HEK293T (cell line): ENCODE measurements at regions of chr5 and their contacts with region 1.

Region 1: GRCh38 chr5:132777209-132778069 is at the start of gene SEPTIN8:
- DNase-seq: peak; percentile 75

Region 2: DNA sequence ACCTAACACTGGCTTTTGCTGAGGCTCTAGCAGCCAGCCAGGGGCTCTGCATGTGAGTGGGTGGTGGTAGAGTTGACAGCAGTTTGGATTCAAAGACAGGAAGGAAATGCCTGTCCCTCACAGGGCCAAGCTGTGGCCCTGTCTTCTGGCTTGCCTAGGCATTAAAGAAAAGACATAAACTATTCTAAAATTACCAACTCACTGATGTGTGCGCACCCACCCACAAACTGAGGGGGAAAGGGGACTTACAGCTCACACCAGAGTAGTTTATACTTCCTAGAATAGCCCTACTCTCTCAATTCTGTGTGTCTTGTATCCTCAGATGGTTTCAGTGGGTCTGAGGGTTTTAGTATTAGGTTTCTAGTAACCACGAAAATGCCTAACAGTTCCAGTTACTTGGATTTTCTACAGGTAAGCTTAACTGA is 137.7 kb before region 1 on chr5:
- CTCF ChIA-PET with region 1: no interaction called
- POLR2A ChIA-PET with region 1: no interaction called
- DNase-seq: no peak

Region 3: GRCh38 chr5:132736853-132737833 is 40.3 kb before region 1 on chr5 and contains the start of gene KIF3A:
- CTCF ChIA-PET with region 1: no interaction called
- POLR2A ChIA-PET with region 1: interaction called, 16 read pairs
- DNase-seq: peak; percentile 100

Region 4: DNA sequence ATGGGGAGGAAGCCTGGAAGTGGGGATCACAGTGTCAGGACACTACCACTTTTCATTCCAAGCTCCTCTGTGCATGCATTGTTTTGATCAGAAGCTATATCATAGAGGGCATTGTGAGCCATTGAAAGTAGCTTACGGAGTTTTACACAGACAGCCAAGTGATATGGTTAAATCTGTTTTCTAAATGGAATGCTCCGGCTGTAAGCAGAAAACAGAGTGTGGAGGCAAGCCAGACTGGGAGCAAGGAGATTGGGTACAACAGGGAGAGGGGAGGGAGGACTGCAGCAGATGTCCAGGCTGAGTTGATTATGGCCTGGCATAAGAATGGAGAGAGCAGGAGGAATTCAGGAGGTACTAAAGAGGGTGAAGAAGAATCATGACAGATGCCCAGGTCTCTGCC is 20.2 kb after region 1 on chr5:
- CTCF ChIA-PET with region 1: interaction called, 3 read pairs
- POLR2A ChIA-PET with region 1: interaction called, 10 read pairs
- DNase-seq: no peak

Region 5: GRCh38 chr5:132854301-132854700 is 76.9 kb after region 1 on chr5:
- CTCF ChIA-PET with region 1: no interaction called
- POLR2A ChIA-PET with region 1: no interaction called
- DNase-seq: no peak